ENCODE measurements at regions of chr17 and their contacts with region 1.

Region 1: GRCh38 chr17:27805520-27806146 is 5.3 kb upstream of the NOS2 start:
- DNase-seq: peak; percentile 67 to 93 (median 86)

Region 2: DNA sequence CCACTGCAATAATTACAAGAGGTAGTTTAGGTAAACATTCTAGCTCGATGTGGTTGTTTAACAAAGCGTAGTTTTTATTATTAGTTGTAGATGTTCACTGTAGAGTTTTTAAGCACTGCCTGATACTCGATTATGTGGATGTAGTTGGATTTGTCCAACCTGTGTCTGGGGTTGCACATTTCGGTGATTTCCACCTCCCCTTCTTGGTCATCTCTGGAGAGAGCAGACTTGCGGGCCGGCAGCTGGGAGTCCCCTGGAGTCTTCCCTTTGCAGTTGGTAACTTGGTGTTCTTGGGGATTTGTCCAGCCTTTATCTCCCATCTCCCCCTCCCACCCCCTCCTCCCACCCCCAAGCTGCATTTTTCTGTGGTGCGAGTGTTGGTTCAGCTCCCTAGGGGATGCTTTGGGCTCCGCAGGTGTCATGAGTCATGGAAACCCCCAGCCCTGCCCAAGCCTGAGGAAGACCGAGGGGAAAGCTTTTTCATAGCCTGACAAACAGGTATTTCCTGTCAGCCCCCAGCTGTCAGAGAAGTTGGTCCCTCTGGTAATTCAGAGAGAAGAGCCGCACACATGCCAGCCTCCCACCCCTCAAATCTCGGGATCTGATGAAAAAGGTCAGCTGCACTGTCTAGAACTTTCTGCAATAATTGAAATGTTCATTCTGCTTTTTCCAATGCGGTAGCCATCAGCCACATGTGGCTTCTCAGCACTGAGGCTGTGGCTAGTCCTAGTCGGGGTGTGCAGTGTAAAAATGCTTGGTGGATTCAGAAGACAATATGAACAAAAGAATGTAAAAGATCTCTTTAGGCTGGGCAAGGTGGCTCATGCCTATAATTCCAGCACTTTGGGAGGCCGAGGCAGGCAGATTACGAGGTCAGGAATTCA is 299.0 kb before region 1 on chr17:
- intact Hi-C with region 1: no loop called
- DNase-seq: no peak

Region 3: GRCh38 chr17:27578718-27579085 is 226.9 kb before region 1 on chr17:
- intact Hi-C with region 1: no loop called
- DNase-seq: no peak

Region 4: DNA sequence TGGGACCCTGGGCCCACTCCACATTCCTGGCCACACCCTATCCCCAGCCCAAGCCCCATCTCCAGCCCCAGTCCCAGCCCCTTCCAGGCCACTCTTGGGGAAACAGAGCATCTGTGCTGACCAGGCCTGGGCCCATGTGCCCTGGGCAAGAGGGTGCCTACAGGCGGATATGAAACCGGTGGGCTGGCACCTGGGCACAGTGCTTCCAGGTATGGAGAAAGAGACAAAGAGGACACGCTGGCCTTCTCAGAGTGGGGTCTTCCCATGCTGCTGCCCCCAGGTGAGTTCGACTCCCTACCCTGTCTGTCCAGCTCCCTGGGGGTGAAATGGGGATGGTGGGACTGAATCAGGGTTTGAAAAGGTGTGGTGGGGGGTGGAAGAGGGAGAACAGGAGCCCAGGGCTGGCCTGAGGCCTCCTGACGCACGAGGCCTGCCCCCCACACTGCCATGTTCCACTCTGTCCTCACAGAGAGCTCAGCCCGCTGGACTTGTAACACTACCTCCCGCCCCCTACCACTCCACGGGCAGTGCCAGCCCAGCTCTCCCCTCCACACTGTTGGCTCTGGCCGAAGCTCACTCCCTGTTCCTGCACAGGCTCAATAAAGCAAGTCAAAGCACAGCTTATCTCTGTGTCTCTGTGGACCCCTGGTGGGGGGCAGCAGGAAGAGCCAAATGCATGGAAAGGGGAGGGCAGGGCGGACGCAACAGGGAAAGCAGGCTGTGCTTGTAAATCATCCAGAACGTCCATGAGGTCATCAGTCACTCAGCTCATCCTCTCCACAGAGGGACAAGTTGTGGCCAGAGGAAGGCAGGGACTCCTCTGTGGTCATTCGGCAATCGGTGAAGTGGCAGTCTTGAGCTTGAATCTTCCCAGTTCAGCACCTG is 442.3 kb after region 1 on chr17:
- intact Hi-C with region 1: loop called (anchors 5 kb)
- DNase-seq: no peak

Measured in head of caudate nucleus (tissue), 42 donors.